Mammary epithelial cell (primary cell): ENCODE measurements at regions of chr1 and their contacts with region 1.

Region 1: GRCh38 chr1:19651141-19651737 is 7.1 kb downstream of the NBL1 start:
- DNase-seq: no peak
- H3K4me3 ChIP-seq: no peak overlapping the region
- H3K27ac ChIP-seq: peak overlapping the region; percentile 73
- H3K4me1 ChIP-seq: peaks cover 80% of the 10 kb centered on the region
- H3K27me3 ChIP-seq: no peaks in the 10 kb centered on the region
- CTCF ChIP-seq: peak; percentile 50 to 70

Region 2: DNA sequence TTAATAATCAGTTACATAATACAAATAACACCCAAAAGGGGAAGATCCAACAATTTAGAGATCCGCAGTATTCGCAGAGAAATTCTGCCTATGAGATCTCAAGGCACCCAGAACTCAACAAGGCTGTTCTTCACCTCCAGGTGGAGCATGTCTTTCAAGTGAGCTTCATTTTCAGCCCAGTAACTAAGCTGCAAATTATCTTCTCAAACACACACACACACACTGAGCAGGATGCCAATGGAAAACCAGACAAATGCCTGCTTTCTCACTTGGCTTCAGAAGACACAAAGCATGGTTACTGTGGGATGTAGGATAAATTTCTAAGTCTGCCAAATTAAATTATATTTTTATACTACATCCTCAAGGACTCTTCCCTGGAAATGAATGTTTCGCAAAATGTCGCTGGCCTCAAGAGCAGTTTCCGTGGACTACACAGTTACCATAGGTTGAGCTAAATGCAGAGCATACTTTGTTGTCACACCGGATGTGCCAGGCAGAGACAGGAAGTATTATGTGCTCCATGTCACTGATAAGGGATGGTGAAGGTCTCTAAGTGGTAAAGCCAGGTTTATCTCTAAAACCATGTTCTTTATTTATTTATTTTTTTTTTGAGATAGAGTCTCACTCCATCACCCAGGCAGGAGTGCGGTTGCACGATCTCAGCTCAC is 471.5 kb before region 1 on chr1:
- CTCF ChIA-PET with region 1: no interaction called
- dilution Hi-C with region 1: no loop called
- in situ Hi-C with region 1: no loop called
- intact Hi-C with region 1: loop called (anchors 10 kb)
- DNase-seq: no peak
- H3K4me3 ChIP-seq: no peak overlapping the region
- H3K27ac ChIP-seq: no peak overlapping the region
- H3K4me1 ChIP-seq: no peaks in the 10 kb centered on the region
- H3K27me3 ChIP-seq: no peaks in the 10 kb centered on the region
- CTCF ChIP-seq: peak; percentile 16 to 32

Region 3: GRCh38 chr1:19240673-19241538 is 410.3 kb before region 1 on chr1:
- CTCF ChIA-PET with region 1: no interaction called
- dilution Hi-C with region 1: no loop called
- in situ Hi-C with region 1: no loop called
- intact Hi-C with region 1: loop called (anchors 5 kb)
- DNase-seq: peak; percentile 58
- H3K4me3 ChIP-seq: no peak overlapping the region
- H3K27ac ChIP-seq: no peak overlapping the region
- H3K4me1 ChIP-seq: no peaks in the 10 kb centered on the region
- H3K27me3 ChIP-seq: no peaks in the 10 kb centered on the region
- CTCF ChIP-seq: peak; percentile 91 to 99

Region 4: GRCh38 chr1:19390901-19391595 is 260.2 kb before region 1 on chr1:
- CTCF ChIA-PET with region 1: no interaction called
- dilution Hi-C with region 1: no loop called
- in situ Hi-C with region 1: loop called in 1 of 2 experiments (anchors 10 kb)
- intact Hi-C with region 1: loop called (anchors 1 kb)
- DNase-seq: peak; percentile 25
- H3K4me3 ChIP-seq: no peak overlapping the region
- H3K27ac ChIP-seq: peak overlapping the region; percentile 4
- H3K4me1 ChIP-seq: peaks cover 34% of the 10 kb centered on the region
- H3K27me3 ChIP-seq: no peaks in the 10 kb centered on the region
- CTCF ChIP-seq: peak; percentile 82

Region 5: DNA sequence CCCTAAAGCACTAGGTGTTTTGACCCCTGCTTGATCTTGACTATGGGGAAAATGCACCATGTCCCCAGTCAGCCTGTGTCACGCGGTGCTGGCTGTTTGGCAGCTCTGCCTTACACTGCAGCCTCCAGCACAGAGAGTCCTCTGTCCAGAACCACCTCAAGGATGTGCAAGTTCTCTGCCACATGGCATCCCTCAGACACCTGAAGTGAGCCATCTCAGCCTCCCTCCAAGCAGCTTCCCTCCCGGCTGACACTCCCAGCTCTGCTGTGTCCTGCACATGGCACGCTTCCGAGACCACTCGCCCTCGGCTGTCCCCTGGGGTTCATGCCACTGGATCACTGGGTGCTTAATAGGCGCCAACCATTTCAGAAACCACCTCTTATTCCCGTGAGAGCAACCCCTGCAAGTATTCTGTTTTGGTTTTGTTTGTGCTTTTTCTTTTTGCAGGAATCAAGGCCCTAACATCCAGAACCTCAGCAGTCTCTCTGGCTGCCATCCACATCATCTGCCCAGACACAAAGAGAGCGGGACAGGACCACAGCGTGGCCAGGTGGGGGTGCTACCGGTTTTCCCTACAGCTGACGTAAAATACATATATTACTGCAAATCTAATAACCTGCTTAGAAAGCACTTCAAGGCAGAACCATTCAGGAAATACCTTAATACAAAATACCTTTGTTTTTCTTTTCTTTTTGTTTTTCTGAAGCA is 211.6 kb before region 1 on chr1:
- CTCF ChIA-PET with region 1: no interaction called
- dilution Hi-C with region 1: no loop called
- in situ Hi-C with region 1: no loop called
- intact Hi-C with region 1: loop called (anchors 2 kb)
- DNase-seq: no peak
- H3K4me3 ChIP-seq: no peak overlapping the region
- H3K27ac ChIP-seq: peak overlapping the region; percentile 59
- H3K4me1 ChIP-seq: peaks cover 63% of the 10 kb centered on the region
- H3K27me3 ChIP-seq: no peaks in the 10 kb centered on the region
- CTCF ChIP-seq: peak in 1 of 2 donors; percentile 27

Region 6: DNA sequence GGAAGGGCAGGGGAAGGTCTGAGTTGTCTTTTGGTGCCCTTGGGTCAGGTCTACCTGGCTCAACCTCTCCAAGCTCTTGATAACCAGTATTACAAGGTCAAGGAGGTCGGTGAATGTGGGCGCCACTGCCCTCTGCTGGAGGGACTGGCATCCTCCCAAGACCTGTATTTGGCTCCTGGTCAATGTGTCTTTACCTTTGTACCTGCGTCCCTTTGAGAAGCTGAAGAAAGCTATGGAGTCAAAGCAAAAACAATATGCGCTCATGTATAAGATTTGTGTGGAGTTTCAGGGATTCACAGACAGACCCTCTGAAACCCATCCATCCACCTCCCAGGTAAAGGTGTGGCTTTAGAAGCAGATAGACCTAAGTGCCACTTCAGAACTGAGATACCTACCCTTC is 68.9 kb before region 1 on chr1:
- CTCF ChIA-PET with region 1: interaction called, 4 read pairs
- dilution Hi-C with region 1: no loop called
- in situ Hi-C with region 1: no loop called
- intact Hi-C with region 1: loop called (anchors 1 kb)
- DNase-seq: peak; percentile 42
- H3K4me3 ChIP-seq: no peak overlapping the region
- H3K27ac ChIP-seq: no peak overlapping the region
- H3K4me1 ChIP-seq: no peaks in the 10 kb centered on the region
- H3K27me3 ChIP-seq: no peaks in the 10 kb centered on the region
- CTCF ChIP-seq: peak; percentile 81 to 83